Activated B cell treated with CpG ODN at 0.5 μM for 24 hours (primary cell): ENCODE measurements at regions of chr5 and their contacts with region 1.

Region 1: GRCh38 chr5:150436141-150436680 is 13.3 kb downstream of the RPS14 start:
- DNase-seq: peak; percentile 76
- ATAC-seq: peak; percentile 95
- H3K4me3 Mint-ChIP-seq: peak overlapping the region; percentile 50
- H3K27ac Mint-ChIP-seq: peak overlapping the region; percentile 92
- H3K4me1 Mint-ChIP-seq: peaks cover 47% of the 10 kb centered on the region
- H3K27me3 Mint-ChIP-seq: no peaks in the 10 kb centered on the region
- CTCF ChIP-seq: no peak

Region 2: GRCh38 chr5:150129813-150130492 is 306.3 kb before region 1 on chr5:
- CTCF ChIA-PET with region 1: interaction called, 3 read pairs
- POLR2A ChIA-PET with region 1: no interaction called
- intact Hi-C with region 1: loop called (anchors 1 kb)
- DNase-seq: peak; percentile 29
- ATAC-seq: peak; percentile 84
- H3K4me3 Mint-ChIP-seq: no peak overlapping the region
- H3K27ac Mint-ChIP-seq: no peak overlapping the region
- H3K4me1 Mint-ChIP-seq: no peaks in the 10 kb centered on the region
- H3K27me3 Mint-ChIP-seq: no peaks in the 10 kb centered on the region
- CTCF ChIP-seq: peak; percentile 50

Region 3: GRCh38 chr5:150217873-150218692 is 218.1 kb before region 1 on chr5:
- CTCF ChIA-PET with region 1: no interaction called
- POLR2A ChIA-PET with region 1: no interaction called
- intact Hi-C with region 1: loop called (anchors 1 kb)
- DNase-seq: peak; percentile 66
- ATAC-seq: peak; percentile 96
- H3K4me3 Mint-ChIP-seq: no peak overlapping the region
- H3K27ac Mint-ChIP-seq: no peak overlapping the region
- H3K4me1 Mint-ChIP-seq: peaks cover 1% of the 10 kb centered on the region
- H3K27me3 Mint-ChIP-seq: peaks cover 15% of the 10 kb centered on the region
- CTCF ChIP-seq: no peak

Region 4: GRCh38 chr5:150357326-150358260 is 78.6 kb before region 1 on chr5 and contains the start of gene TCOF1:
- CTCF ChIA-PET with region 1: interaction called, 3 read pairs
- POLR2A ChIA-PET with region 1: no interaction called
- intact Hi-C with region 1: loop called (anchors 2 kb)
- DNase-seq: peak; percentile 98
- ATAC-seq: peak; percentile 97
- H3K4me3 Mint-ChIP-seq: peak within 1 kb of the TSS; percentile 89
- H3K27ac Mint-ChIP-seq: peak within 1 kb of the TSS; percentile 93
- H3K4me1 Mint-ChIP-seq: peaks cover 49% of the 10 kb centered on the region
- H3K27me3 Mint-ChIP-seq: no peaks in the 10 kb centered on the region
- CTCF ChIP-seq: no peak
- total RNA-seq, gene TCOF1: 74.7 and 76.1 TPM in 2 replicates

Region 5: GRCh38 chr5:150419630-150420270 is 16.5 kb before region 1 on chr5:
- CTCF ChIA-PET with region 1: interaction called, 5 read pairs
- POLR2A ChIA-PET with region 1: interaction called, 2,478 read pairs
- intact Hi-C with region 1: loop called (anchors 1 kb)
- DNase-seq: no peak
- ATAC-seq: peak; percentile 99
- H3K4me3 Mint-ChIP-seq: peak overlapping the region; percentile 62
- H3K27ac Mint-ChIP-seq: peak overlapping the region; percentile 98
- H3K4me1 Mint-ChIP-seq: peaks cover 64% of the 10 kb centered on the region
- H3K27me3 Mint-ChIP-seq: no peaks in the 10 kb centered on the region
- CTCF ChIP-seq: no peak

Region 6: DNA sequence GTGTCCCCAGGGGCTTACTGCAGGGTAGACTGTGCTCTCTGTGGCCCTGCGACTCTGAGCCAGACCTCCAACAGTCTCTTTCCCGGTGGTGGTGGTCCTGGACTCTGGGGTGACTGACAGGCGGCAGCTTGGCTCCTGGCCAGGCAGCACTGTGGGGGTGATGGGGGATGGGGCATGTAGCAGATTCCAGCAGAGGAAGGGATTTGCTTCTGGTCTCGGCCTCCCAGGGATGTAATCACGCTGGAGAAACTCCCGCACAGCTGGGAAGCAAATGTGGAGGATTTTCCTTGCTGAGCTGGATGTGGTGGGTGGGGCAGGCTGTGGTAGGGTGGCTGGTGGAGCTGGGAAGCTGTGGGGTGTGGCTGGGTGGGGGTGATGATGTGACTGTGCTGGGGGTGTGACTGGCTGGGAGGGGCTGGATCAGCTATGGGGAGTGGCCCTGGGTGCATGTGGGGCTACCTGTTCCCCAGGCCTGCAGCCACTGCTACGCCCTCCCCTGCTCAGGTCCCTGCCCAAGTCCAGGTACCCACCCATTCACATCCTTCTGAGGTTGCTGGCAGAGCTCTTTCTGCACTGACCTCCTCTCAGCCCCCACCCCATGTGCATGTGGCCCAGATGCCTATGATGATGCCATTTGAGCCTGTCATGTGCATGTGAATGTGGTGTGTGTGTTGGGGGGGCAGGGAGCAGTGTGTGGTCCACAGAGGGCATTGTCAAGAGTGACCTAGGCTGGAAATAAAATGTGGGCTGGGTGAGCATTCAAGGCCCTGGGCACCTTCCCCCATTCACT is 75.6 kb after region 1 on chr5:
- CTCF ChIA-PET with region 1: no interaction called
- POLR2A ChIA-PET with region 1: no interaction called
- intact Hi-C with region 1: no loop called
- DNase-seq: no peak
- ATAC-seq: no peak
- H3K4me3 Mint-ChIP-seq: no peak overlapping the region
- H3K27ac Mint-ChIP-seq: no peak overlapping the region
- H3K4me1 Mint-ChIP-seq: peaks cover 1% of the 10 kb centered on the region
- H3K27me3 Mint-ChIP-seq: no peaks in the 10 kb centered on the region
- CTCF ChIP-seq: no peak